ENCODE measurements at regions of chr16 and their contacts with region 1.

Region 1: GRCh38 chr16:69190598-69190997 is 3.6 kb downstream of the SNTB2 start:
- DNase-seq: no peak
- ATAC-seq: no peak

Region 2: DNA sequence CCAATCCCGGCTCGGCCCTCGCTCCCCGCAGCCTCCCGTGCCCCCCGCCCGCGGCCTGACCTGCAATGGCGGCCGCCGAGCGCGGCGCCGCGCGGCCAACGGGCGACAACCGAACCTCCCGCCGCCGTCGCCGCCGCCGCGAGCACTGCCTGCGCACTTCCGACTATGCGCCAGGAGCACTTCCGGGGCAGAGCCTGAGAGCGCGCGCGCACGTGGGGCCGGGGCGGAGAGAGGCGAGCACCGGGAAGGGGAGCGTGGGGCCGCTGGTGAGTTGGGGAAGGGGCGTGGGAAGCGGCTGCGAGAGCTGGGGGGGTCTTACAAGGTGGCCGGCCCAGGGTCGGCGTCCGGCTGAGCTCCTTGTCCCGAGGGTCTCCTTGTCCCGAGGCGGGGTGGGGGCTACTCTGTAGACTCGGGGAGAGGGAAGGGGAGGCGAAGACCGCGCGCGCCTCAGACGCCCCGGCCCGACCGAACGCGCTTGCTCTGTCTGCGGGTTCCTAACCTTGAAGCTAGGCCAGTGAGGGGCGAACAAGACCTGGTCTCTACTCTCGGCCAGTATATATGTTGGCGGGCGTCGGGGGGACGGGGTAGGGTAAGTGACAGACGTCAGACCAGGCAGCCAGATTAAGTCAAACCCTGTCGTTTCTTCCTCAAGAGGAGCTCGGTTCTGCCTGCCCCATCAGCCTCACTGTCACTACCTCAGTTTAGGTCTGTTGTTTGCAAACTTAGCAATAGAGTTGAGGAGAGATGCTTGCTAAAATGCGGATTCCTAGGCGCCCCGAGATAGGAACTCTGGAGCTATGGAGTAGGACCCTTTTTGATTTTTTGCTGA is 58.0 kb before region 1 on chr16 and contains the starts of genes CHTF8 and UTP4:
- intact Hi-C with region 1: loop called (anchors 10 kb)
- DNase-seq: peak; percentile 92
- ATAC-seq: peak; percentile 97
- total RNA-seq, gene CHTF8: 52.5 TPM
- total RNA-seq, gene UTP4: 24.1 TPM

Region 3: GRCh38 chr16:69448470-69449193 is 258.0 kb after region 1 on chr16:
- intact Hi-C with region 1: no loop called
- DNase-seq: no peak
- ATAC-seq: peak; percentile 25